PC-3 (cell line): ENCODE measurements at regions of chr20 and their contacts with region 1.

Region 1: DNA sequence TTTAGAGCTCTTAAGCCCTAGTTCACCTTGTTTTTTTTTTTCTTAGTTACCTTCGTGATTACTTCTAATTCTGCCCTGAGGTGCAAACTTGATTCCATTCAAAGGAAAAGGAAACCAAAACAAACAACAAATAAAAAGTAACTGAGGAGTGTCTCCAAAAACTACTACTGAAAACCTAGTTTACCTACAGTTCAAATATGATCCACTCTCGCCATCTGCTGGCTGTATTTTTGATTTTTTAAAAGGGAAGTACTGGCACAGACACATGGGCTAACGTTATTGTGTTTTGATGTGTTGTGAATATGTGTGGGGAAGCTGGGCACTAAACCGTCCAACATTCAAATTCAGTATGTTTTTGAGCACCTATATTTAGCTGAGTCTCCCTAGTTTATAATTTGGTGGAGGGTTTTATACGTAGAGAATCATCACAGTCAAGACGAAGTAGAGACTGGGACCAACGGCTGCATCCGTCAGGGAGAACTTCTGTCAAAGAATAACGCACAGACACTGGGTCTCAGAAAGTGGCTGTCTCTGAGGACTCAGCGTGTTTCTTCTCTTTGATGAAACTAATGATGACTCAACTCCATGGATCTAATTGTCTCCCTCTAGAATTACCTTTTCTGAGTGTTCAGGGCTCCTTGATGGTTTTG is 373.5 kb upstream of the BTBD3 start:
- DNase-seq: peak; percentile 94
- ATAC-seq: peak; percentile 91
- H3K4me3 ChIP-seq: peak overlapping the region; percentile 55
- H3K27ac ChIP-seq: no peak overlapping the region
- H3K4me1 ChIP-seq: peaks cover 11% of the 10 kb centered on the region
- H3K27me3 ChIP-seq: no peaks in the 10 kb centered on the region
- CTCF ChIP-seq: peak; percentile 90

Region 2: GRCh38 chr20:9616833-9617489 is 1927.2 kb before region 1 on chr20:
- CTCF ChIA-PET with region 1: no interaction called
- POLR2A ChIA-PET with region 1: no interaction called
- intact Hi-C with region 1: loop called (anchors 5 kb)
- DNase-seq: peak; percentile 89
- ATAC-seq: peak; percentile 74
- H3K4me3 ChIP-seq: peak overlapping the region; percentile 28
- H3K27ac ChIP-seq: no peak overlapping the region
- H3K4me1 ChIP-seq: no peaks in the 10 kb centered on the region; the same call in 1 of the 2 replicates
- H3K27me3 ChIP-seq: peaks cover 12% of the 10 kb centered on the region; the same call in 1 of the 2 replicates
- CTCF ChIP-seq: peak; percentile 97

Region 3: GRCh38 chr20:10316582-10316981 is 1227.6 kb before region 1 on chr20:
- CTCF ChIA-PET with region 1: no interaction called
- POLR2A ChIA-PET with region 1: no interaction called
- intact Hi-C with region 1: loop called (anchors 5 kb)
- DNase-seq: peak; percentile 57
- ATAC-seq: peak; percentile 45
- H3K4me3 ChIP-seq: no peak overlapping the region
- H3K27ac ChIP-seq: no peak overlapping the region
- H3K4me1 ChIP-seq: no peaks in the 10 kb centered on the region
- H3K27me3 ChIP-seq: peaks cover 27% of the 10 kb centered on the region
- CTCF ChIP-seq: peak; percentile 73

Region 4: GRCh38 chr20:10536531-10536930 is 1007.6 kb before region 1 on chr20:
- CTCF ChIA-PET with region 1: no interaction called
- POLR2A ChIA-PET with region 1: no interaction called
- intact Hi-C with region 1: loop called (anchors 5 kb)
- DNase-seq: peak; percentile 73
- ATAC-seq: peak; percentile 25
- H3K4me3 ChIP-seq: no peak overlapping the region
- H3K27ac ChIP-seq: peak overlapping the region; percentile 19
- H3K4me1 ChIP-seq: peaks cover 41% of the 10 kb centered on the region
- H3K27me3 ChIP-seq: no peaks in the 10 kb centered on the region
- CTCF ChIP-seq: peak; percentile 77

Region 5: GRCh38 chr20:11001767-11002540 is 542.2 kb before region 1 on chr20:
- CTCF ChIA-PET with region 1: no interaction called
- POLR2A ChIA-PET with region 1: no interaction called
- intact Hi-C with region 1: loop called (anchors 10 kb)
- DNase-seq: peak; percentile 99
- ATAC-seq: peak; percentile 99
- H3K4me3 ChIP-seq: 0 out of 2 replicates have a peak overlapping the region, but pooled peaks have one; percentile 7
- H3K27ac ChIP-seq: peak overlapping the region; percentile 93
- H3K4me1 ChIP-seq: peaks cover 24% of the 10 kb centered on the region
- H3K27me3 ChIP-seq: no peaks in the 10 kb centered on the region
- CTCF ChIP-seq: no peak

Region 6: GRCh38 chr20:11287126-11287525 is 257.0 kb before region 1 on chr20:
- CTCF ChIA-PET with region 1: interaction called, 4 read pairs
- POLR2A ChIA-PET with region 1: no interaction called
- intact Hi-C with region 1: loop called (anchors 5 kb)
- DNase-seq: no peak
- ATAC-seq: no peak
- H3K4me3 ChIP-seq: no peak overlapping the region
- H3K27ac ChIP-seq: no peak overlapping the region
- H3K4me1 ChIP-seq: no peaks in the 10 kb centered on the region
- H3K27me3 ChIP-seq: no peaks in the 10 kb centered on the region
- CTCF ChIP-seq: no peak